Adrenal gland (tissue), 19 donors: ENCODE measurements at regions of chr9 and their contacts with region 1.

Region 1: GRCh38 chr9:87812375-87813118 is 70.1 kb upstream of the SPATA31E1 start:
- DNase-seq: peak in 4 of 7 donors; percentile 28 to 64 (median 44)
- H3K4me3 ChIP-seq: no peak overlapping the region
- H3K27ac ChIP-seq: no peak overlapping the region
- H3K4me1 ChIP-seq: no peaks in the 10 kb centered on the region
- H3K27me3 ChIP-seq: no peaks in the 10 kb centered on the region
- CTCF ChIP-seq: peak; percentile 89 to 98 (median 94)
- POLR2A ChIP-seq: no peak

Region 2: DNA sequence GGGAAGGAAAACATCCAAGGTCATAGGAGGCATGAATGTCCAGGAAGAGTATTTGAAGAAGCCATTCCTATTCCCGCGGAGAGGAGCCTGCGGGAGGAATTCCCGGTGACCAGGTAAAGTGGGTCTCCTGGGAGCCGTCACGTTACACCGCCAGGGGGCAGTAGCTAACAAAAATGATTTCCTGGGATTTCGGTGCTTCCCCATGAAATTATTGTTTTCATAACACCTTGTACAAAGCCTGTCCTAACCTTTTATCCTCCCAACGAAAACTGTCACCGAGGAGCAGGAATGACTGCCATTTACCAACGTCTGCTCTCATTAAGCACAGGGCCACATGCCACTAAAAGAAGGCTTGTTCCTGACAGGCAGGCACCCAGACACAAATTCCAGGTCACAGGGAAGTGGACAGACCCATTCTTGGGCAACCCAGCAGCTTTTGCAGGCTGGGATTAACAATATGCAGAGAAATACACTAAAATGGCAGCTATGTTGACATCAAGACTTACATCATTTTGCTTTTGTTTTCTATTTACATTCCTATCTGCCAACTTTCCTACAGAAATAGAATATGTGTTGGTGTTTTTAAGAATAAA is 127.8 kb before region 1 on chr9:
- intact Hi-C with region 1: loop called (anchors 2 to 5 kb)
- DNase-seq: peak in 6 of 7 donors; percentile 53 to 83 (median 64)
- H3K4me3 ChIP-seq: no peak overlapping the region
- H3K27ac ChIP-seq: peak overlapping the region in 2 of 5 donors; percentile 13 to 48
- H3K4me1 ChIP-seq: peaks cover 0 to 13% of the 10 kb centered on the region in 2 donors
- H3K27me3 ChIP-seq: no peaks in the 10 kb centered on the region
- CTCF ChIP-seq: peak; percentile 65 to 83 (median 73)
- POLR2A ChIP-seq: no peak

Region 3: GRCh38 chr9:87766703-87767102 is 45.8 kb before region 1 on chr9:
- intact Hi-C with region 1: no loop called
- DNase-seq: no peak
- H3K4me3 ChIP-seq: no peak overlapping the region
- H3K27ac ChIP-seq: no peak overlapping the region
- H3K4me1 ChIP-seq: no peaks in the 10 kb centered on the region
- H3K27me3 ChIP-seq: peaks cover 16% of the 10 kb centered on the region
- CTCF ChIP-seq: no peak
- POLR2A ChIP-seq: no peak